ENCODE measurements at regions of chr19 and their contacts with region 1.

Region 1: DNA sequence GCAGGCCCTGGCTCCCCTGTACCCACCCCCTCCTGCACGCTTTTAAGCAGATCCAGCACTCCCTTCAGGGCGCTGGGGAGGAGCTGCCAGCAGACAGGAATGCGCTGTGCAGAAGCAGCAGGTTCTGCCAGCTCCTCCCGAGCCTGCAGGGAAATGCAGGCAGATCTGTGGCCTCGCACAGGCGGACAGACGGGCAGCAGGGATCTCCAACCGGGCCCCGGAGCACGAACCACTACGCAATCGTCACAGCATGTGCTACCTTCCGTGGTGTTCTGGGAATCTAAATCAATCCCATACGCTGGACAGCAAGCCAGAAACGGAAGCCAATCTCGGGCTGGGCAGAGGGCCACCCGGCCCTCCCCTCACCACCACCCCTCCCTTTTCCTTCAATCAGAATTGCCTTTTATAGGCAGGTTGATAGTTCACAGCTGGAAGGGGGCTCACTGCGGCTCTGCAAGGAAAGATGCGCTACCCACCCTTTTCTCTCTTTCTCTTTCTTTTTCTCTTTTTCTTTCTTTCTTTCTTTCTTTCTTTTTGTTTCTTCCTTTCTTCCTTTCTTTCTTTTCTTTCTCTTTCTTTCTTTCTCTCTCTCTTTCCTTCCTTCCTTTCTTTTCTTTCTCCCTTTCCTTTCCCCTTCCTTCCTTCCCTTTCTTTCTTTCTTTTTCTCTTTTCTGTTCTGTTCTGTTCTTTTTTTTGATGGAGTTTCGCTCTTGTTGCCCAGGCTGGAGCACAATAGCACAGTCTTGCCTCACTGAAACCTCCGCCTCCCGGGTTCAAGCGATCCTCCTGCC is 99.9 kb downstream of the GNG7 start:
- DNase-seq: no peak
- ATAC-seq: no peak
- H3K4me3 Mint-ChIP-seq: no peak overlapping the region
- H3K27ac Mint-ChIP-seq: no peak overlapping the region
- H3K4me1 Mint-ChIP-seq: peaks cover 11% of the 10 kb centered on the region
- H3K27me3 Mint-ChIP-seq: peaks cover 2% of the 10 kb centered on the region

Region 2: GRCh38 chr19:2517868-2518625 is 84.5 kb before region 1 on chr19:
- POLR2A ChIA-PET with region 1: no interaction called
- DNase-seq: no peak
- ATAC-seq: no peak
- H3K4me3 Mint-ChIP-seq: no peak overlapping the region
- H3K27ac Mint-ChIP-seq: no peak overlapping the region
- H3K4me1 Mint-ChIP-seq: peaks cover 4% of the 10 kb centered on the region
- H3K27me3 Mint-ChIP-seq: peaks cover 1% of the 10 kb centered on the region

Region 3: DNA sequence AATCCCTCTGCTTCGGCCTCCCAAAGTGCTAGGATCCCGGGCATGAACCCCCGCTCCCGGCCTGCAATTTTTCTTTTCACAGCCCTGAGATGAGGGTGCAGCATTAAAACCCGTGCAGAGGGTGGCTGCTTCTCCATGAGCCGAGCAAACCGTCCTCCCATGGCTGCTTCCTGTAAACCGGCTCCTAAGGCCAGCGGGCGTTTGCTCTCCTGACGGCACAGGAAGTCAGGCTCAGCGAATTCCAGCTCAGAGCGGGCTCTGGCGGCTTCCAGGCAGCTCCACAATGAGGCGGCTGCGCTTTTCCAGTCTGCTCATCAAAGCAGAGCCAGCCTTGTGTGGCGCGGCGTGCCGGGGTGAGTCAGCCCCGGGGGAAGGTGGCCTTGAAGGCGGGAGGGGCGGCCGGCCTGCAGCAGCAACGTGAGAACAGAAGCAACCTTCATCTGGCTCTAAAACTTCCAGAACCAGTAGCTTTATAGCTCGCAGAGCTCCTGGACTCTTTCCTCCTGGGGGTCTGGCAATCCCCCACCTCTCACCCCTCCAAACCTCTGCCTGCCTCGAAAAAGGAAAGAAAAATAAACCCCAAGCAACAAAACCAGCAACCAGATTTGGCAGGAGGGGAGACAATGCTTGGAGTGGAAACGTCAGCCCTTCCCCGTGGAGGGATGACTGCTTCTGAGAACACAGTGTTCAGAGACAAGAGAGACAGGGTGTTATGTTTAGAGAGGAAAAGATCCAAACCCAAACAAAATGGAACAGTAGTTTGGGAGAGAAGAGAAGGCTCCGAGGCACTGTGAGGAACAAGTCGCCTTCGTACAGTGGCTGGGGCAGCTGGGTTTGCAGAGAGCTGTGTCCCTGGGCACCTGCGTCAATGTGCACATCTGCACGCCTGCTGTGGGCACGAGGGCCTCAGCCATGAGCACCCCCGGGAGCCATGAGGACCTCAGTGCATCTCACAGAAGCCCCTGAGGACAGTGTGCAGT is 58.8 kb before region 1 on chr19:
- POLR2A ChIA-PET with region 1: interaction called, 10 read pairs
- DNase-seq: peak; percentile 76
- ATAC-seq: peak; percentile 91
- H3K4me3 Mint-ChIP-seq: peak overlapping the region; percentile 75
- H3K27ac Mint-ChIP-seq: peak overlapping the region; percentile 90
- H3K4me1 Mint-ChIP-seq: peaks cover 15% of the 10 kb centered on the region
- H3K27me3 Mint-ChIP-seq: no peaks in the 10 kb centered on the region

Region 4: DNA sequence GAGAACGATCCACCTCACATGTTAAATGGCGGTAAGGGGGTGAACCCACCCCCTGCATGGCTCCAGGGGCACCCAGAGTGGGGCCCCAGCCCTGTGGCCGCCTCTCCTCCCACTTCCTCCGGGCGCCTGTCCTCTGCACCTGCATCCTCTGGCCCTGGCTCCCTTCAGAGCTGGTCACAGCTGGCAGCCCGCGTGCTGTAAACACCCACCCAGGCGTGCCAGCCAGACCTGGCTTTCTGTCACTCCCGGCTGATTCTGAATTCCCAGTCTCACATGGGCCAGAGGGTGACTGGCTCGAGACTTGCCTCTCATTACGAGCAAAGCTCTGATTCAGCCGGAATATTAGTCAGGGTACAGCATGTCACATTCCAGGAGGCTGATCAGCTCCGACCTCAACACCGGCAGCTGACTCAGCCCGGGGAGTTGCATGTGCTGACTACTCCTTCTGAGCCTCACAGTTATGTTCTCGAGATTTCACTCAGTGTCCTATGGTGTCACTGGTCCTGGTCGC is 24.8 kb after region 1 on chr19:
- POLR2A ChIA-PET with region 1: interaction called, 23 read pairs
- DNase-seq: no peak
- ATAC-seq: no peak
- H3K4me3 Mint-ChIP-seq: peak overlapping the region; percentile 5
- H3K27ac Mint-ChIP-seq: peak overlapping the region; percentile 21
- H3K4me1 Mint-ChIP-seq: peaks cover 18% of the 10 kb centered on the region
- H3K27me3 Mint-ChIP-seq: no peaks in the 10 kb centered on the region